ENCODE measurements at regions of chr1 and their contacts with region 1.

Region 1: DNA sequence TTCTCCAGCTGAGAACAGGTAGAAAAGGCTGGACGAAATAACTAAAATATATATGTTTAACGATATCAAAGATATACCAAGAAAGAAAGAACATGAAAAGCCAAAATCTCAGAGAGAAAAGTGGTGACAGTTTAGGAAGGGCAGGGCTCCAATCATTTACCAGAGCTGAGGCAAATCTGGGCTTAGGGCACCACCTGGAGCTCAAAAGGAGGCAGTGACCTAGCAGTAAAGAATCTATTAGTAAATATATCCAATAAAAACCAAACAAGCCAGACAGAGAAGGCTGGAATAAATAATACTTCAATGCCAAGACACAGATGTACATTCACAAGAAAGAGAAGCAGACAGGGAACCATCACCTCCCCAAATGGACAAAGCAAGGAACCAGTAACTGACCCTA is 43.5 kb downstream of the CHIA start:
- DNase-seq: no peak
- H3K4me3 ChIP-seq: no peak overlapping the region
- H3K27ac ChIP-seq: no peak overlapping the region
- H3K4me1 ChIP-seq: no peaks in the 10 kb centered on the region
- H3K27me3 ChIP-seq: no peaks in the 10 kb centered on the region
- CTCF ChIP-seq: peak; percentile 37 to 84 (median 72)
- EP300 ChIP-seq: no peak
- POLR2A ChIP-seq: no peak
- RAD21 ChIP-seq: peak; percentile 96

Region 2: GRCh38 chr1:111197598-111198284 is 136.4 kb before region 1 on chr1:
- CTCF ChIA-PET with region 1: interaction called, 50 read pairs
- POLR2A ChIA-PET with region 1: no interaction called
- DNase-seq: peak; percentile 54 to 68
- H3K4me3 ChIP-seq: no peak overlapping the region
- H3K27ac ChIP-seq: no peak overlapping the region
- H3K4me1 ChIP-seq: no peaks in the 10 kb centered on the region
- H3K27me3 ChIP-seq: no peaks in the 10 kb centered on the region; a peak in 1 of 7 replicates
- CTCF ChIP-seq: peak; percentile 86 to 87 (median 87)
- EP300 ChIP-seq: no peak
- POLR2A ChIP-seq: no peak
- RAD21 ChIP-seq: peak; percentile 69 to 73

Region 3: GRCh38 chr1:111320106-111320879 is 13.9 kb before region 1 on chr1:
- CTCF ChIA-PET with region 1: interaction called, 10 read pairs
- POLR2A ChIA-PET with region 1: no interaction called
- DNase-seq: no peak
- H3K4me3 ChIP-seq: no peak overlapping the region
- H3K27ac ChIP-seq: no peak overlapping the region
- H3K4me1 ChIP-seq: no peaks in the 10 kb centered on the region
- H3K27me3 ChIP-seq: no peaks in the 10 kb centered on the region
- CTCF ChIP-seq: no peak
- EP300 ChIP-seq: no peak
- POLR2A ChIP-seq: no peak
- RAD21 ChIP-seq: no peak

Region 4: DNA sequence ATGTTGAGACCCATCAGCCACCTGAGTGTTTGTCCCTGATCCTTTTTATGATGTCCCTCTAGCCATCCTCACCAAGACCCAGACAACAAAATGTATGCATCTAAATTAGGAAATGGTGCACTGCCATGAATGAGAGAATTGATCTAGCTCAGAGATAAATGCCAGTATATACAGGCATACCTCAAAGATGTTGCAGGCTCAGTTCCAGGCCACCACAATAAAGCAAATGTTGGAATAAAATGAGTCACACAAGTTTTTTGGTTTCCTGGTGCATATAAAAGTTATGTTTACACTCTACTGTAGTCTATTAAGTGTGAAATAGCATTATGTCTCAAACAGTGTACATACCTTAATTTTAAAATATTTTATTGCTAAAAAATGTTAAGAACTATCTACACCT is 20.4 kb after region 1 on chr1:
- CTCF ChIA-PET with region 1: no interaction called
- POLR2A ChIA-PET with region 1: no interaction called
- DNase-seq: no peak
- H3K4me3 ChIP-seq: no peak overlapping the region
- H3K27ac ChIP-seq: no peak overlapping the region
- H3K4me1 ChIP-seq: peaks cover 0 to 2% (median 0%) of the 10 kb centered on the region in 4 experiments; a peak in 1 of 7 replicates
- H3K27me3 ChIP-seq: no peaks in the 10 kb centered on the region
- CTCF ChIP-seq: no peak
- EP300 ChIP-seq: no peak
- POLR2A ChIP-seq: no peak
- RAD21 ChIP-seq: no peak

Region 5: DNA sequence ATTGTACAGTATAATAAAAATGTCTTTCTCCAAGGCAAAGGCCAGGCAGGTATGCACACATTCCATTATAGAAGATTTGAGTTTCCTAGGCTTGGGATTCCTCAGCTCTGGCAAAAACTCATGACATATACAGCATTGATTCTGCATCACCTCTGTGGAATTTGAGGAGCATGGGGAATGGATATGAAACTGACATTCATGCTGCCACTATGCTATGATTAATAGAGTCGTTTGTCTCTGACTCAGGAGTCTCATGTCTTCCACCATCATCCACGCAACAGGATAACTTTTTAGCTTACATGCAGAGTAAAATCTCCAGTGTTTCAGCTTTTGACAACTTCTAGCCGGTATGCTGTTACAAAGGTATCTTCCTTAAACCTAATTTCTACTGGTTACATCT is 219.0 kb after region 1 on chr1:
- CTCF ChIA-PET with region 1: no interaction called
- POLR2A ChIA-PET with region 1: no interaction called
- DNase-seq: no peak
- H3K4me3 ChIP-seq: no peak overlapping the region
- H3K27ac ChIP-seq: no peak overlapping the region
- H3K4me1 ChIP-seq: no peaks in the 10 kb centered on the region
- H3K27me3 ChIP-seq: no peaks in the 10 kb centered on the region
- CTCF ChIP-seq: no peak
- EP300 ChIP-seq: no peak
- POLR2A ChIP-seq: no peak
- RAD21 ChIP-seq: no peak

Measured in H1 (cell line).